ENCODE measurements at regions of chr1 and their contacts with region 1.

Region 1: DNA sequence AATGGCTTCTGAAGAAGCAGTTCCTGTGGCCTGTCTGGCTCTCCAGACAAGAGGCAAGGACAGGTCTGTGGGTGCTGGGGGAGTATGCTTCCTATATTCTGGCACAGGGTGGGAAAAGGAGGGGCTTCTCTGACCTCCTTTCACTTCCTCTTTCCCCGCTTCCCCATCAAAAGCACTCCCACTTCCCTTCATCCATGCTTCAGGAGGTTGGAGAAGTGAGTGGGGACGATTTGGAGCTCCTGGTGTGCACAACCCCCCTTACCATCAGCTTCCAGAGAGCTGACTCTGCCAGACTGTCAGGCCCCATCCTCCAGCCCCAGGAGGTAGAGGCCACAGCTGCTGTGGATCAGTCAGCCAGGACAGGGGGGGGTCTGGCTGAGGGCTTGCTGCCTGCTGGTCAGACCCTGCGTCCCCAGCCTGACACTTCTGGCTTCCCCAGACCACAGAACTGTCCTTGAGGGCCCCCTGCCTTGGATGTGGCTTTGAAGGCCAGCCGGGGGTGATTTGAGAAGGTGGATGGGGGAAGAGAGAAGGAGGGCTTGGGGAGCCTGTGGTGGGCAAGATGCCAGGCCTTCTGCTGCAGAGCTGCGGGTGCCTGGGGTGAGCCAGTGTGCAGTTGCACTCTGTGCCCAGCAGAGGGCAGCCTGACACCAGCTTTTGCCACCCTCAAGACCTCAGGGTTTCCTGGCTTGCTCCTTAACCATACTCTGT is 21.5 kb upstream of the TMEM222 start:
- DNase-seq: peak; percentile 62
- H3K4me3 ChIP-seq: peak overlapping the region; percentile 29
- CTCF ChIP-seq: peak; percentile 99

Region 2: GRCh38 chr1:26983863-26984262 is 316.6 kb before region 1 on chr1:
- CTCF ChIA-PET with region 1: no interaction called
- POLR2A ChIA-PET with region 1: no interaction called
- DNase-seq: no peak
- H3K4me3 ChIP-seq: no peak overlapping the region
- CTCF ChIP-seq: no peak

Region 3: GRCh38 chr1:27044613-27045151 is 255.8 kb before region 1 on chr1:
- CTCF ChIA-PET with region 1: interaction called, 111 read pairs
- POLR2A ChIA-PET with region 1: no interaction called
- DNase-seq: no peak
- H3K4me3 ChIP-seq: no peak overlapping the region
- CTCF ChIP-seq: peak; percentile 95

Region 4: GRCh38 chr1:27192039-27192529 is 108.4 kb before region 1 on chr1:
- CTCF ChIA-PET with region 1: interaction called, 57 read pairs
- POLR2A ChIA-PET with region 1: no interaction called
- DNase-seq: no peak
- H3K4me3 ChIP-seq: no peak overlapping the region
- CTCF ChIP-seq: no peak

Region 5: GRCh38 chr1:27225621-27226020 is 74.9 kb before region 1 on chr1:
- CTCF ChIA-PET with region 1: no interaction called
- POLR2A ChIA-PET with region 1: no interaction called
- DNase-seq: no peak
- H3K4me3 ChIP-seq: no peak overlapping the region
- CTCF ChIP-seq: no peak

Region 6: DNA sequence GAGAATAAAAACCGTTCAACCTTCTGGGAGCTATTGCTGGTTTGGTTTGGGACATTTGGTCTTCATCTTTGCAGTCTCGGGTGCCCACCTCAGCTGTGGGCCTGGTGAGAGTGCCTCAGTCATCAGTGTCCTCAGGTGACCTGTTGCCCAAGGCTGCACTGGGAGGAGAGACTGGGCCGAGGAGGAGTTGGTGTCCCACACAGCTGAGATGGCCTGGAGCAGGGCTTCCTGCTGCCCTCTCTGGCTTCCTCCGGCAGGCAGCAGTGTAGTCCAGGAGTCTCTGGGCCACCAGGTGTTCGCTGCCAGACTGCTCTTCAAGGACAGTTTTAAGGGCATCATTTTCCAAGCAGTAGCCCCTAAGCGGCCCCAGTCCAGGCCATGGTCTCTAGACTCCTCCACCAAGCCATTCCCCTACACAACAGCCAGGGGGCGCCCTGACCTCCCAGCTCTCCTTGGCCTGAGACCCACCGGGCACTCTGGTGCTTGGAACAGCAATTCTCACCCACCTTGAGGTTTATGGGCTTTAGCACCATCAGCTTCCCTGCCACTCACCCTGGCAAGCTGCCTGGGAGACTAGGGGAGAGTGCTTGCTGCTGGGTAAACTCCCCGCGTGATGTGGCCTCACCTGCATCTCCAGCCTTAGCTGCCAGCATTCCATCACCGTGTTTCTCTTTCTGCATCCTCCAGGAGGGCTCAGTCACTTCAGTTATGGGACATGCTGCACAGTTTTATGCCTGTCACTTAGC is 32.2 kb after region 1 on chr1:
- CTCF ChIA-PET with region 1: interaction called, 84 read pairs
- POLR2A ChIA-PET with region 1: no interaction called
- DNase-seq: no peak
- H3K4me3 ChIP-seq: no peak overlapping the region
- CTCF ChIP-seq: peak; percentile 85

Region 7: DNA sequence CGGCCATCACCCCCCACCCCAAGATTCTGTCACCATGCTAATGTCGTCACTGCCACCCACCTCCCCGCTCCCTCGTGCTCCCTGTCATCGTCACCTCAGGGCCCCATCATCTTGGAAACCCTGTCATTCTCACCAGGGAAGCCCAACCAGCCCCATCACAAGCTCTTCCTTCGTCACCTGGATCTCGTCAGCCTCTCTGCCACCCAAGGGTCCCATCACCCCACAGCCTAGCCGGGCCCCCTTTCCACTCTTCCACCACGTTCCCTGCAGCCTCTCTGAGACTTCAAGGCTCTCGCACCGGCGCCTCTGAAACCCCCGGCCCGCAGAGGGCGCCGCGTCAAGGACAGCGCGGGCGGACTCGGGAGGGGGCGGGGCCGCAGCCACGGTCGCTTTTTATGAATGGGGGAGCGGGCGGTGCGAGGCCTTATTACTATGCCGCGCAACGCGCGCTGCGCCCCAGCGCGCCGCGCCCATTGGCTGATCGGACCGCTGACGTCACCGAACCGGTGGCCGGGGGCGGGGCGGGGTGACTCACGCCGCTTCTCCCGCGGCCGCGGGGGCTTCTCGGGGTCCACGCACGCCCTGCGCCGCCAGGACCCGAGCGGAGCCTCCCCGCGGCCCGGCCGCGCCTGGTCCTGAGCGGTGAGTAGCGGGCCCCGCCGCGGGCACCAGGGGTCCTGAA is 91.7 kb after region 1 on chr1 and contains the start of gene GPR3:
- CTCF ChIA-PET with region 1: interaction called, 671 read pairs
- POLR2A ChIA-PET with region 1: interaction called, 17 read pairs
- DNase-seq: no peak
- H3K4me3 ChIP-seq: peak within 1 kb of the TSS; percentile 71
- CTCF ChIP-seq: peak; percentile 83

Region 8: DNA sequence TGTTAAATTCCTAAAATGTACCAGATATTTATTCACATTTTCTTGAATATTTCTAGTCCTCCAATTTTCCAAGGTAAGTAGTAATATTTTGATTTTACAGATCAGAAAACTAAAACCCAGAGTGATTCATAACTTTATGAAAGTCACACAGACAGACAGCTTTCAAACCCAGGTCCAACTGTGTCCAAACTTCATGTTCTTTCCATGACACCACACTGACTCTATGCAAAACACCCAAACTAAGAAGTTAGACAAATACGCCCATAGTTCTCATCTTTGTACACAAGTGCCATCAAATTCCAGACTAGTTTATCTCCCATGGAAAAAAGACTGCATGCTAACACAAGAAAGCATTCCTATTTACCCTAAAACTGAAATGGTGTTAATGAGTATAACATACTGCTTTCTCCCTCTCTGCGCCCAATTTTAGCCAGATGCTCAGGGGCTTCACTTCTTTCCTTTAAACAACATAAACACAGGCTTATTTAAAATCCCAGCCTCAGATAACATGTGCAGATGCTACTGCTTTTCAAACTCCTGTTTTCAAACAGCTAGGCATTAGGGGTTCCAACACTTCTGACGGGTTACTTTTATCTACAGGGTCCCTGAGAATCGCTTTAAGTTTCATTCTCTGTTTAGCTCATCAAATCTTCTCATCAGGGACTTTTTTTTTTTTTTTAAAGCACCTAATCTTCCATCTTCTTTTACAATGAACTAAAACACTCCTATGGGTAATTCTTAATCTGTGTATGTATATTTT is 144.9 kb after region 1 on chr1:
- CTCF ChIA-PET with region 1: no interaction called
- POLR2A ChIA-PET with region 1: no interaction called
- DNase-seq: no peak
- H3K4me3 ChIP-seq: no peak overlapping the region
- CTCF ChIP-seq: no peak

Region 9: GRCh38 chr1:27662707-27663393 is 362.4 kb after region 1 on chr1:
- CTCF ChIA-PET with region 1: interaction called, 77 read pairs
- POLR2A ChIA-PET with region 1: no interaction called
- DNase-seq: no peak
- H3K4me3 ChIP-seq: no peak overlapping the region
- CTCF ChIP-seq: peak; percentile 79

Measured in AG04449 (cell line).